ENCODE measurements at regions of chr19 and their contacts with region 1.

Region 1: GRCh38 chr19:40285353-40286234 is 449 bp upstream of the AKT2 start:
- DNase-seq: peak; percentile 92
- ATAC-seq: peak; percentile 79
- H3K4me3 Mint-ChIP-seq: peak overlapping the region; percentile 82
- H3K27ac Mint-ChIP-seq: peak overlapping the region; percentile 96
- H3K4me1 Mint-ChIP-seq: peaks cover 56% of the 10 kb centered on the region
- H3K27me3 Mint-ChIP-seq: no peaks in the 10 kb centered on the region
- CTCF ChIP-seq: no peak

Region 2: GRCh38 chr19:40139533-40140287 is 145.9 kb before region 1 on chr19:
- CTCF ChIA-PET with region 1: interaction called, 3 read pairs
- POLR2A ChIA-PET with region 1: no interaction called
- intact Hi-C with region 1: loop called (anchors 10 kb)
- DNase-seq: no peak
- ATAC-seq: peak; percentile 47
- H3K4me3 Mint-ChIP-seq: no peak overlapping the region
- H3K27ac Mint-ChIP-seq: no peak overlapping the region
- H3K4me1 Mint-ChIP-seq: peaks cover 33% of the 10 kb centered on the region
- H3K27me3 Mint-ChIP-seq: peaks cover 7% of the 10 kb centered on the region
- CTCF ChIP-seq: no peak

Region 3: DNA sequence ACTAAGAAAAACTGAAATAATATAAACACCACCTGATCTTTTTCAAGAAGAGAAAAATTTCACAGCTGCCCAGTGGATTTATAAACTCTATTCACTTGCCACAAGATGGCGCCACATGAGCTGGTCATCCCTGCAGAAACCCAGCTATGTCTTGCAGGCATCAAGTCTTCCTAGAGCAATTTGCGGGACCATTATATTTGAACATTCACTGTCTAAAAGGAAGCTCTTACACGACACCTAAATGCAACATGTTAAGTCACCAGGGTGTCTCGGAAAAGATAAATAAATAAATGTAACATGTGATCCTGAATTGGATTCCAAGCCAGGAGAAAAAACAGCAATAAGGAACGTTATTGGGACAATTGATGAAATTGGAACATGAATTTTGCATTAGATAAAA is 19.8 kb after region 1 on chr19:
- CTCF ChIA-PET with region 1: interaction called, 4 read pairs
- POLR2A ChIA-PET with region 1: interaction called, 4 read pairs
- intact Hi-C with region 1: loop called (anchors 1 kb)
- DNase-seq: peak; percentile 44
- ATAC-seq: peak; percentile 69
- H3K4me3 Mint-ChIP-seq: no peak overlapping the region
- H3K27ac Mint-ChIP-seq: no peak overlapping the region
- H3K4me1 Mint-ChIP-seq: peaks cover 2% of the 10 kb centered on the region
- H3K27me3 Mint-ChIP-seq: no peaks in the 10 kb centered on the region
- CTCF ChIP-seq: no peak

Region 4: GRCh38 chr19:40465557-40466150 is 180.1 kb after region 1 on chr19 and contains the start of gene BLVRB:
- CTCF ChIA-PET with region 1: no interaction called
- POLR2A ChIA-PET with region 1: interaction called, 4 read pairs
- intact Hi-C with region 1: loop called (anchors 1 kb)
- DNase-seq: peak; percentile 99
- ATAC-seq: peak; percentile 89
- H3K4me3 Mint-ChIP-seq: peak within 1 kb of the TSS; percentile 81
- H3K27ac Mint-ChIP-seq: peak within 1 kb of the TSS; percentile 68
- H3K4me1 Mint-ChIP-seq: peaks cover 36% of the 10 kb centered on the region
- H3K27me3 Mint-ChIP-seq: peaks cover 14% of the 10 kb centered on the region
- CTCF ChIP-seq: no peak
- total RNA-seq, gene BLVRB: 12.3 and 14.6 TPM in 2 replicates

Region 5: DNA sequence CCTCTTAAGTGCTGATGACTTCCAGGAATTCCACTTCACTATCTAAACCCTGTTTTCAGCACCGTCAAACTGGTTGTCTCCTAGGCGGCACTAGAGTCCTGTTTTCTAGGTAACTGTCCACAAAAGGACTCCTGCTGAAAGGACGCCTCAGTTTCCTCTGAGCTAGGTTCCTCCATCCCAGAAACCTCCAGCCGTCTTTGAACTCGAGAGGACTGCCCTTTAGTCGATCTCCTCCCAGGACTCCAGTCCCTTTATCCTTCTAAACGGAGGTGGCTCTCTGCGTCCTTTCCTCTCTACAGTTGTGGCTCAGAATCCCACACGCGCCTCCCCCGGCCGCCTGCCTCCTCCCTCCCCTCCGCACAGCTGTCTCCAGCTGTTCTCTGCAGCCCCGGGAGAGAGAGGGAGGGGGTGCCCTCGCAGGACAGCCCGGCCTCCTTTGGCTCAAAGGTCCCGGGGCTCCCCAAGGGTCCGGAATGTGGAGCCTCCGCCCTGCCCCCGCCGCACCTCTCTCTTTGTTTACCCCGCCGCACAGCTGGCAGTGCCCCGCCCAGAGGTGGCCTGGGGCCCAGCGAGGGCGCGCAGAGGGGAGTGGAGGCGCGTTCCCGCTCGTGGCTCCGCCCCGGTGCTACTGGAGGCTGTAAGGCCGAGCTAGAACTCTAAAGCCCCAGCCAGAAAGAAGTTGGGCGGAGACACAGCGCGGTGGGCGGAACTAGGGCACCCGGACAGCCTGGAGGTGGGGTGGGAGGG is 318.0 kb after region 1 on chr19:
- CTCF ChIA-PET with region 1: no interaction called
- POLR2A ChIA-PET with region 1: interaction called, 12 read pairs
- intact Hi-C with region 1: no loop called
- DNase-seq: peak; percentile 90
- ATAC-seq: peak; percentile 72
- H3K4me3 Mint-ChIP-seq: peak overlapping the region; percentile 85
- H3K27ac Mint-ChIP-seq: peak overlapping the region; percentile 77
- H3K4me1 Mint-ChIP-seq: peaks cover 69% of the 10 kb centered on the region
- H3K27me3 Mint-ChIP-seq: peaks cover 22% of the 10 kb centered on the region
- CTCF ChIP-seq: no peak